Activated naive CD4-positive, alpha-beta T cell treated with anti-CD3 and anti-CD28 coated beads for 36 hours (primary cell): ENCODE measurements at regions of chr1 and their contacts with region 1.

Region 1: GRCh38 chr1:171422511-171422910 is 62.8 kb upstream of the PRRC2C start:
- DNase-seq: no peak
- H3K4me3 Mint-ChIP-seq: no peak overlapping the region
- H3K27ac Mint-ChIP-seq: no peak overlapping the region
- H3K4me1 Mint-ChIP-seq: peaks cover 25% of the 10 kb centered on the region
- H3K27me3 Mint-ChIP-seq: no peaks in the 10 kb centered on the region

Region 2: DNA sequence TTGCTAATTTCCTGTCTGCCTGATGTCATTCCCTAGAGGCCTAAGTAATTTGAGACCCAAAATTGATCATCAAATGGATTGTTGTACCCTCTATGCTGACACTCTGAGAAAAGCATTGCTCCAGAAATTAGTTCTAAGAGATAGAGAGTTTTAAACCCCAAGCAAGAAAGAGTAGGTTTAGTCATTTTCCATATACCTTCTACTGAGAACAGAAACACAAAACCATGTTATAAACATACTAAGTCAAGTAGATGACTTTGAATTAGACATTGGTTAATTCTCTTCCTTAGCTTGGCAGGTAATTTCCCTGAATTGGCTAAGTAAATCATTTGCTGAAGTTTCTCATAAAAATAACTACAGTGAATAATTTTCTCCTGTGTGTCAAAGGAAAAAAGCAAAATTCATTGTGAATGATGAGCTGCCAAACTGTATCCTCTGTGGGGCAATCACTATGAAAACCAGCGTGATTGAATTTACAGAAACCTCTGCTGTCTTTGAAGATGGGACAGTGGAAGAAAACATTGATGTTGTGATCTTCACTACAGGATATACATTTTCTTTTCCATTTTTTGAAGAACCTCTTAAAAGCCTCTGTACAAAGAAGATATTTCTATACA is 88.4 kb before region 1 on chr1:
- CTCF ChIA-PET with region 1: no interaction called
- intact Hi-C with region 1: loop called (anchors 1 kb)
- DNase-seq: no peak
- H3K4me3 Mint-ChIP-seq: no peak overlapping the region
- H3K27ac Mint-ChIP-seq: peak overlapping the region; percentile 6
- H3K4me1 Mint-ChIP-seq: peaks cover 3% of the 10 kb centered on the region
- H3K27me3 Mint-ChIP-seq: no peaks in the 10 kb centered on the region

Region 3: GRCh38 chr1:171389171-171389570 is 33.3 kb before region 1 on chr1:
- CTCF ChIA-PET with region 1: no interaction called
- intact Hi-C with region 1: no loop called
- DNase-seq: no peak
- H3K4me3 Mint-ChIP-seq: no peak overlapping the region
- H3K27ac Mint-ChIP-seq: no peak overlapping the region
- H3K4me1 Mint-ChIP-seq: no peaks in the 10 kb centered on the region
- H3K27me3 Mint-ChIP-seq: peaks cover 3% of the 10 kb centered on the region

Region 4: DNA sequence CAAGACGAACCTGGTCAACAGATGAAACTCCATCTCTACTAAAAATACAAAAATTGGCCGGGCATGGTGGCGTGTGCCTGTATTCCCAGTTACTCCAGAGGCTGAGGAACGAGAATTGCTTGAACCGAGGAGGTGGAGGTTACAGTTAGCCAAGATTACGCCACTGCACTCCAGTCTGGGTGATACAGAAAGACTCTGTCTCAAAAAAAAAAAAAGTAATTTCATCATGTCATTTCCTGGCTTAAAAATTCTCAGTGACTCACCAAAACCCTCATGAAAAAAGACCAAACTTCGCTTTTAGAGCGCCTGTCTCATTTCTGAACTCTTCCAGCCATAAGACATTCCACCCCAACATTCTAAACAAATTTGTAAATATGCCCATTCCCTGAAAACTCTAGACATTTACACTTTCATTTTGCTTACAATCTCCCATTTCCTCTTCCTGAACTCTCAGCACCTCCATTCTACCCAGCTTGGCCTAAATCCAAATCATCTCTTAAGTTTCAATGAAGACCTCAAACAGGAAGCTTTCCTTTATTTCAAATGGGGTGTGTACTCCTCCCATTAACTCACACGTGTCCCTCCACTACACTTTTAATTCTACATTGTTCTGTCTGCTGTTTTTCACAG is 12.3 kb after region 1 on chr1:
- CTCF ChIA-PET with region 1: interaction called, 4 read pairs
- intact Hi-C with region 1: loop called (anchors 1 kb)
- DNase-seq: peak; percentile 52
- H3K4me3 Mint-ChIP-seq: peak overlapping the region; percentile 23
- H3K27ac Mint-ChIP-seq: peak overlapping the region; percentile 87
- H3K4me1 Mint-ChIP-seq: peaks cover 18% of the 10 kb centered on the region
- H3K27me3 Mint-ChIP-seq: peaks cover 6% of the 10 kb centered on the region

Region 5: GRCh38 chr1:171501305-171502024 is 79.0 kb after region 1 on chr1:
- CTCF ChIA-PET with region 1: interaction called, 3 read pairs
- intact Hi-C with region 1: loop called (anchors 5 kb)
- DNase-seq: no peak
- H3K4me3 Mint-ChIP-seq: no peak overlapping the region
- H3K27ac Mint-ChIP-seq: peak overlapping the region; percentile 71
- H3K4me1 Mint-ChIP-seq: peaks cover 87% of the 10 kb centered on the region
- H3K27me3 Mint-ChIP-seq: no peaks in the 10 kb centered on the region